ENCODE measurements at regions of chr15 and their contacts with region 1.

Region 1: DNA sequence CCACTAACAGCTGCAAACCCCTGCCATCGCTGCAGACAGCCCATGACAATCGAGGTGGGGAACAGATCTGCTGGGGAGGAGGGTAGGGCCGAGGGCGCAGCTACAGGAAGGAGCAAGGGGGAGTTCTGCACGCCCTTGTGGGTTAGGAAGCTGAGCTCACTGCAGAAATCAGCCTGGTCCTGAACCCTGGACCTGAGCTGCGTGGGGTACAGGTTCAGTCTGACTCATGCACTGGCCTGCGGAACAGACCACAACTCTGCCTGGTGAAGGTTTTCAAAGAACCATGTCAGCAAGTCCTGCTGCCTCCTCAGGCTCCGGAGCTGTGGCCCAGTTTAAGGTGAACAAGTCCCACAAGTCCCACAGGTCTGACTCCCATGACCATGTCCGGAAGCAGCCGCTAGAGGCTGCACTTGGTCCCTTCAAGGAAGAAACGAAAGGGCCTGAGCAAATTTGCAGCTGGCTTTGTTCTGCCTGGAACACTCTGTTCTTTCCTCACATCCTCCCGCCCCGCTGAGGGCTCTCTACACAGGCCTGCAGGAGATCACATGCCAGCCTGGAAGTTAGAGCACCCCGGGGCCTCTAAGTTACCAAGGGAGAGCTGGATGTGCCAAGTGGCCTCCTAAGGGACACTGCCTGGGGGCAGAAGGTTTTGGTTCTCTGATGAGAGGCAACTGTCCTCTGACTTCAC is 49.4 kb upstream of the AKAP13 start:
- DNase-seq: peak; percentile 96
- H3K4me3 ChIP-seq: peak overlapping the region; percentile 68
- H3K27ac ChIP-seq: peak overlapping the region; percentile 99
- H3K4me1 ChIP-seq: peaks cover 64% of the 10 kb centered on the region
- CTCF ChIP-seq: peak; percentile 95

Region 2: DNA sequence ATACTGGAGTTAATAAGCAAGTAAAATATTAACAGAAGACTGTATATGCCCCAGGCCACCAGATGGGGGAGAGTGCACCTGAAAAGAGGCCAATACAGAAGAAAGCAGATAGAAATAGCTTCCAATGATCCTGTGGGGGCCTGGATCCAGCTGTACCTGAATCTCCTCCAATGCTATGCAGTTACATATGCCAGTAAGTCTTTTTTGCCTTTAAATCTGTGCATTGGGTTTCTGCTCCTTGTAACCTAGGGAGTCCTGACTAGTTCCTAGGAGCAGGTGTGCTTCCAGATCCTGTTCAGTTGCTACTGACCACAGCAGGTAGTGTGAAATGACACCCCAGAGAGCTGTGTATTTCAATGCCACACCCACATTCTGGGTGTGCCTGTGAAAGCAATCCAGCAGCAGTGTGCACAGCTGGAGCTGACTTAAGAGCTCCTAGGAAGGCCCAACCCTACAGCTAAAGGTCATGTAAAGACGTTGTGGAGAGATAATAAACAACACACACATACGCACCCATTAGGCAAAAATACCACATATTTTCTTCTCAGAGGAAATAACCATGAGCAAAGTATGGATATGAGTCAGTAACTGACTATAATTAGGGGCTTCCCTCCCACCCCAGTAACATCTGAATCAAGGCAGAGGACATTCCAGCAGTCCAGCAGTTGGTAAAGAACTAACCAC is 12.9 kb before region 1 on chr15:
- CTCF ChIA-PET with region 1: interaction called, 5 read pairs
- POLR2A ChIA-PET with region 1: interaction called, 68 read pairs
- intact Hi-C with region 1: no loop called
- DNase-seq: peak; percentile 39
- H3K4me3 ChIP-seq: no peak overlapping the region
- H3K27ac ChIP-seq: no peak overlapping the region
- H3K4me1 ChIP-seq: peaks cover 12% of the 10 kb centered on the region
- CTCF ChIP-seq: peak; percentile 77

Region 3: DNA sequence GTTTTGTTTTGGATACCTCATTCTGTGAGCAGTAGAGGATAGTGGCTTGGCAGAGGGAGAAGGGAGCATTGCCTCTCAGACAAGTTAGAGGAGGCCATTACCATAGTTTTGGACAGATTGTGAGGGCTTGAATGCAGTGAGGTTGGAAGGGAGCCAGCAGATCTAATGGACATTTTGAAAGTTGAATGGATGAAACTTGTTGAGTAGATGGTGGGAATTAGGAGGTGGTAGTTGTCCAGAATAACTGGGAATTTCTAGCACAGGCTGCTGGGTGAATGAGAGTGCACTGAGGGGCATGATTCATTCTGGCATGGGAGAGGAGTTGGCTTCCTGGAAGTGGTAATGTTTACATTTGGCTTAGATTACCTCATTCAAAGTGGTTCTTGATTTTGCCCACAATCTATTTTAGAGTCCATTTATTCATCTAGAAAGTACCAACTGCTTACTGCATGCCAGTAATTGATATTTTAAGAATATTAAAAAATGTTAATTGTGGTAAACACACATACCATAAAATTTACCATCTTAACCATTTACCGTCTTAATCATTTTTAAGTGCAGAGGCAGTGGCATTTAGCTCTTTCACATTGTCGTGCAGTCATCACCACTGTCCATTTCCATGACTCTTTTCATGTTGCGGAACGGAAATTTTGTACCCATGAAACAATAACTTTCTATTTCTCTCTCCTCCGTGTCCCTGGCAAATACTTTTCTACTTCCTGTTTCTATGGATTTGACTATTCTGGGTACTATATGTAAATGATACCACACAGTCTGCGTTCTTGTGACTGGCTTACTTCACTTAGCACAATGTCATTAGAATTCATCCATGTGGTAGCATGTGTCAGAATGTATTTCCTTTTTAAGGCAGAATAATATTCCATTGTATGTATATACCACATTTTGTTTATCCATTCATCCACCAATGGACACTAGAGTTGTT is 77.0 kb after region 1 on chr15:
- CTCF ChIA-PET with region 1: interaction called, 24 read pairs
- POLR2A ChIA-PET with region 1: interaction called, 109 read pairs
- intact Hi-C with region 1: loop called (anchors 1 kb)
- DNase-seq: peak; percentile 55
- H3K4me3 ChIP-seq: peak overlapping the region; percentile 16
- H3K27ac ChIP-seq: peak overlapping the region; percentile 97
- H3K4me1 ChIP-seq: peaks cover 92% of the 10 kb centered on the region
- CTCF ChIP-seq: no peak

Region 4: DNA sequence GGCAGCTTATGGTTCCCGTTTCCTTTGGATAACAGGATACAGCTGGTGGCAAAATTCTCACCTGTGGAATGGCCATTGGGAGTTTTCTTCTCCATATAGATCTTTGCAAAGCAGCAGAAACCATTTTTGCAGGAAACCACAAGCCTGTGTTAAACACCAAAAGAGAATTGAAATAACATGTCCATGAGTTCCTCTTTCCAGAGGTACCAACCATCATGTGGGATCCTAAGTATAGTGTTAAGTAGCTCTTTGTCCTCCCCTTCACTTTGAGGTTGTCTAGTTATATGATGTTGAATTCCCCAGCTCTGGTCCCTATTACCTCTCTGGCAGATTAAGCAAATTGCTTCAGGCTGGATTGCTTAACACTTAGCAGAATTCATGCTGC is 144.3 kb after region 1 on chr15:
- CTCF ChIA-PET with region 1: interaction called, 6 read pairs
- POLR2A ChIA-PET with region 1: interaction called, 7 read pairs
- intact Hi-C with region 1: loop called (anchors 2 kb)
- DNase-seq: peak; percentile 85
- H3K4me3 ChIP-seq: peak overlapping the region; percentile 52
- H3K27ac ChIP-seq: peak overlapping the region; percentile 92
- H3K4me1 ChIP-seq: peaks cover 99% of the 10 kb centered on the region
- CTCF ChIP-seq: no peak

Region 5: GRCh38 chr15:85582131-85583079 is 251.4 kb after region 1 on chr15:
- CTCF ChIA-PET with region 1: no interaction called
- POLR2A ChIA-PET with region 1: no interaction called
- intact Hi-C with region 1: loop called (anchors 2 kb)
- DNase-seq: peak; percentile 78
- H3K4me3 ChIP-seq: peak overlapping the region; percentile 59
- H3K27ac ChIP-seq: peak overlapping the region; percentile 61
- H3K4me1 ChIP-seq: peaks cover 50% of the 10 kb centered on the region
- CTCF ChIP-seq: no peak

Region 6: DNA sequence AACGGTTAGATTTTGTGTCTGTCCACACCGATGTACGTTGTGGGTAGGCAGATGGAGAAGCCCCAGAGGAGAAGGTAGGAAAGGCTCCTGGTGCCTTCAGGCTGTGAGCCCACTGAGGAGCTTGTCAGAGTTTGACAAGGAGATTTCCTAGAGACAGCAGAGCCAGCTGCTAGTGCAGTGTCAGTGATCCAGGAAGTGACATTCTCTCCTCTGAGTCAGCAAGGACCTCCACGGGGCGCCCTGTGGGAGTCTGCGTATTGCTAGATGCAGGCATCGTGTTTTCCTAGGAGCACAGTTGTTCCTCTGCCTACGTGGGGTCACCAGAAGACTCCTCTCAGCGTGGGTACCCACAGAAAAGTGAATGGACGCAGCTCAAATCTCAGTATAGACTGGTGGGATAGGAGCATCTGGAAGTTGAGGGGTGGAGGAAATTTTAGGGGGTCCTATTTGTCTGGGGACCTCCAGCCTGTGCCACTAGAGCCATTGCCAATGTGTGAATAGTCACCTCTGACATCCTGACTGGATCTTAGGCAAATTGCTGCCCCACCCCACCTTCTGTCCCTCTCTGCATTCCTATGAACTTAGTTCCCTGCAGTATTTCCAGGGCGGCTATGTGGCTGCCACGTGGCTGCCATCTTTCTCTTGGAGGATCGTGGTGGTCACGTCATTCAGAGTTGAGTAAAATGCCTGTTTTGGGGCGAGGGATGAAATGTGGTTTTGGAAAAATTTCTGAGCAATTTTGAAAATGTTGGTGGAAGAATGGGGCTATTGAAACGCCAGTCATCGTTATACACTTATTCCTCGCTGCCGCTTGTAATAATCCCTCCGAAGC is 548.5 kb after region 1 on chr15:
- CTCF ChIA-PET with region 1: no interaction called
- POLR2A ChIA-PET with region 1: no interaction called
- intact Hi-C with region 1: no loop called
- DNase-seq: no peak
- H3K4me3 ChIP-seq: no peak overlapping the region
- H3K27ac ChIP-seq: no peak overlapping the region
- H3K4me1 ChIP-seq: no peaks in the 10 kb centered on the region
- CTCF ChIP-seq: no peak